ENCODE measurements at regions of chr1 and their contacts with region 1.

Region 1: GRCh38 chr1:98749152-98749756 is 87.7 kb downstream of the SNX7 start:
- DNase-seq: no peak

Region 2: DNA sequence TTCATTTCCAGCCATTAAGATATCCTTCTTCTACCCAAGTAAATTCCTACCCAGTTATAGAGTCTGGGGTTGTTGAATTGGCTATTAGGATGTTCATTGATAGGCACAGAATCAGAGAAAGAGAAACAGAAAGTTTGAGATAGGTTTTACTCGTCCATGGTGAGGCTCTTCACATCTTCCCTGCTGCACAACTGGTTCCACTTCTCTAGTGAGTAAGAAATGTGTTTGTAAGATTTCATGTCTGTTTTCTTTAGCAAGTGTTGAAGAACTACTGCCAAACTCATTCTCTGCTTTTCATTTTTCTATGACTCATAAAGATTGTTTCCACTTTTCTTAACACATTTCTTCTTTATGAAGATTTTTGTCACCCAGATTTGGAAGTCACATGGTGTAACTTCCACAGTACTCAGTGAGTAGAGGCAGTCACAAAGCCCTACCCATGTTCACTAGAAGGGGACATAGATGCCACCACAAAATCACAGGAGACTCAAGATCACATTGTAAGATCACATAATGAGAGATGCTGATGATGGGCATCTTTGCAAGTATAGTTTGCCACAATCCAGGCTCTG is 64.6 kb after region 1 on chr1:
- intact Hi-C with region 1: no loop called
- DNase-seq: no peak

Region 3: GRCh38 chr1:99481391-99481996 is 732.2 kb after region 1 on chr1:
- intact Hi-C with region 1: loop called (anchors 10 kb)
- DNase-seq: peak in 28 of 42 donors; percentile 12 to 83 (median 62)